PC-9 (cell line): ENCODE measurements at regions of chr1 and their contacts with region 1.

Region 1: GRCh38 chr1:43763497-43763973 is 56.2 kb downstream of the ST3GAL3 start:
- DNase-seq: peak; percentile 77 to 80
- H3K4me3 ChIP-seq: no peak overlapping the region
- H3K27ac ChIP-seq: peak overlapping the region; percentile 27
- H3K4me1 ChIP-seq: peaks cover 8% of the 10 kb centered on the region
- H3K27me3 ChIP-seq: no peaks in the 10 kb centered on the region
- CTCF ChIP-seq: peak; percentile 95

Region 2: DNA sequence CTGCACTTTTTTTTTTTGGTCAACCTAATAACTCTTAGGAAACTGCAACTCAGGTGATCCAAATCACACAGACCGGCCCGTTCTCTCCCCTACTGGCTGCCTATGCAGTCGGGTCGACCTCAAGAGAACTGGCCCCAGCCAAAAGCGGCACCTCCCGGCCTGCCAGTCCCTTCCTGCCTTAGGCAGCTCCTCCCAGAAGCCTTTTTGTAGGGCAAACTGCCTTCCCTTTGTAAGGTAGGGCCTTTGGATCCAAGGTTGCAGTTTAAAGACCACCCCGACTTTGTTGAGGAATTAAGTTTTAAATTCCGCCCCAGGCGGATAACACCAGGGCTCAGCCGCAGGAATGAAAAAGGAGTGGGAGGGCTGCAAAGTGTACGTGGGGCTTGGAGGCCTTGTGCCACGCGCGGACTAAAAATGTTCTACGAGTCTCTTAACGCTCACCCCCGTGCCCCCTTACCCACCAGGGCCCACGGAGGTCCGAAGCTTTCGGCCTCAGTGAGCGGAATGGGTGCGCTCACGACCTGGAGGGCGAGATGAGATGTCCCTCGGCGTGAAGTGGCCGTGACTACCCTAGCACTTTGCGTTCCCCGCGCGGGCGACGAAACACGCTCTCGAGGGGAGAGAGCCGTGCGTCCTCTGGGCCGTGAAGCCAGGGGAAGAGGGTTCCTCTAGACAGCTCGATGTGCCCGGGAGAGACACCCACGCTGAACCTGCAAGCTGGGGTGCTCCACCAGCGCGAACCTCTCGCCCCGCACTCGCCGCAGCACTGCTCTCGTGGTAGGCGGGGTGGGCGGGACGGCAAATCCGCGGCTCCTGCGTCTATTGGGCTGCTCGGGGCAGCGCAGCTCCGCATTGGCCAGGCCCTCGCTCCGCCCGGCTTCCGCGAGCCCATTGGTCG is 56.7 kb before region 1 on chr1:
- CTCF ChIA-PET with region 1: interaction called, 4 read pairs
- POLR2A ChIA-PET with region 1: no interaction called
- intact Hi-C with region 1: loop called (anchors 5 kb)
- DNase-seq: peak; percentile 81 to 96
- H3K4me3 ChIP-seq: peak overlapping the region; percentile 92
- H3K27ac ChIP-seq: no peak overlapping the region
- H3K4me1 ChIP-seq: peaks cover 28% of the 10 kb centered on the region
- H3K27me3 ChIP-seq: no peaks in the 10 kb centered on the region
- CTCF ChIP-seq: no peak

Region 3: GRCh38 chr1:43799656-43800635 is 36.4 kb after region 1 on chr1:
- CTCF ChIA-PET with region 1: no interaction called
- POLR2A ChIA-PET with region 1: no interaction called
- intact Hi-C with region 1: no loop called
- DNase-seq: no peak
- H3K4me3 ChIP-seq: no peak overlapping the region
- H3K27ac ChIP-seq: no peak overlapping the region
- H3K4me1 ChIP-seq: no peaks in the 10 kb centered on the region
- H3K27me3 ChIP-seq: no peaks in the 10 kb centered on the region
- CTCF ChIP-seq: no peak

Region 4: GRCh38 chr1:43836267-43836951 is 72.9 kb after region 1 on chr1:
- CTCF ChIA-PET with region 1: interaction called, 5 read pairs
- POLR2A ChIA-PET with region 1: no interaction called
- intact Hi-C with region 1: loop called (anchors 1 kb)
- DNase-seq: peak; percentile 68 to 95
- H3K4me3 ChIP-seq: no peak overlapping the region
- H3K27ac ChIP-seq: peak overlapping the region; percentile 94
- H3K4me1 ChIP-seq: peaks cover 62% of the 10 kb centered on the region
- H3K27me3 ChIP-seq: no peaks in the 10 kb centered on the region
- CTCF ChIP-seq: no peak

Region 5: GRCh38 chr1:43910359-43910758 is 146.8 kb after region 1 on chr1:
- CTCF ChIA-PET with region 1: interaction called, 4 read pairs
- POLR2A ChIA-PET with region 1: no interaction called
- intact Hi-C with region 1: loop called (anchors 1 kb)
- DNase-seq: no peak
- H3K4me3 ChIP-seq: no peak overlapping the region
- H3K27ac ChIP-seq: no peak overlapping the region
- H3K4me1 ChIP-seq: peaks cover 4% of the 10 kb centered on the region; the same call in 1 of the 2 replicates
- H3K27me3 ChIP-seq: no peaks in the 10 kb centered on the region
- CTCF ChIP-seq: no peak

Region 6: GRCh38 chr1:43991476-43992231 is 228.1 kb after region 1 on chr1 and contains the start of gene CCDC24:
- CTCF ChIA-PET with region 1: interaction called, 3 read pairs
- POLR2A ChIA-PET with region 1: no interaction called
- intact Hi-C with region 1: loop called (anchors 5 kb)
- DNase-seq: peak; percentile 85 to 96
- H3K4me3 ChIP-seq: peak within 1 kb of the TSS; percentile 59
- H3K27ac ChIP-seq: peak within 1 kb of the TSS; percentile 86
- H3K4me1 ChIP-seq: peaks cover 25% of the 10 kb centered on the region
- H3K27me3 ChIP-seq: no peaks in the 10 kb centered on the region
- CTCF ChIP-seq: no peak
- total RNA-seq, gene CCDC24: 47.9 and 56.5 TPM in 2 replicates

Region 7: DNA sequence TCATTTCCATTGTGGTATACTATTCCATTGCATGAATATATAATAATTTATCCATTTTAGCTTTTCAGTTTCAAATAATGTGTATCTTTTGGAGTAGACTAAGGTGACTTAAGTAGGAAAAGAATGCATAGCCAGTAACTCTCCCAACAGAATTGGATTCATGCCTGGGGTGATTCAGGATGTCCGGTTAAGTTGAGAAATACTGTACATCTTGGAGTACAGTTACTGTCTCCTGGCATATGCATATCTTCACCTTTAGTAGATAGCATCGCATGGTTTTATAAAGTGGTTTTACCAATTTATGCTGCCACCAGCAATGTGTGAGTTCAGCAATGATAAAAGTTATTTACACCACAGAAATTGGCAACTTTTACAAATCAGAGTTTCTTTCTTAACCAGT is 286.3 kb after region 1 on chr1:
- CTCF ChIA-PET with region 1: interaction called, 23 read pairs
- POLR2A ChIA-PET with region 1: no interaction called
- intact Hi-C with region 1: no loop called
- DNase-seq: peak; percentile 30 to 79
- H3K4me3 ChIP-seq: peak overlapping the region; percentile 38; the same call in 1 of the 2 replicates
- H3K27ac ChIP-seq: peak overlapping the region; percentile 89
- H3K4me1 ChIP-seq: peaks cover 55% of the 10 kb centered on the region
- H3K27me3 ChIP-seq: no peaks in the 10 kb centered on the region
- CTCF ChIP-seq: no peak